ENCODE measurements at regions of chr2 and their contacts with region 1.

Region 1: DNA sequence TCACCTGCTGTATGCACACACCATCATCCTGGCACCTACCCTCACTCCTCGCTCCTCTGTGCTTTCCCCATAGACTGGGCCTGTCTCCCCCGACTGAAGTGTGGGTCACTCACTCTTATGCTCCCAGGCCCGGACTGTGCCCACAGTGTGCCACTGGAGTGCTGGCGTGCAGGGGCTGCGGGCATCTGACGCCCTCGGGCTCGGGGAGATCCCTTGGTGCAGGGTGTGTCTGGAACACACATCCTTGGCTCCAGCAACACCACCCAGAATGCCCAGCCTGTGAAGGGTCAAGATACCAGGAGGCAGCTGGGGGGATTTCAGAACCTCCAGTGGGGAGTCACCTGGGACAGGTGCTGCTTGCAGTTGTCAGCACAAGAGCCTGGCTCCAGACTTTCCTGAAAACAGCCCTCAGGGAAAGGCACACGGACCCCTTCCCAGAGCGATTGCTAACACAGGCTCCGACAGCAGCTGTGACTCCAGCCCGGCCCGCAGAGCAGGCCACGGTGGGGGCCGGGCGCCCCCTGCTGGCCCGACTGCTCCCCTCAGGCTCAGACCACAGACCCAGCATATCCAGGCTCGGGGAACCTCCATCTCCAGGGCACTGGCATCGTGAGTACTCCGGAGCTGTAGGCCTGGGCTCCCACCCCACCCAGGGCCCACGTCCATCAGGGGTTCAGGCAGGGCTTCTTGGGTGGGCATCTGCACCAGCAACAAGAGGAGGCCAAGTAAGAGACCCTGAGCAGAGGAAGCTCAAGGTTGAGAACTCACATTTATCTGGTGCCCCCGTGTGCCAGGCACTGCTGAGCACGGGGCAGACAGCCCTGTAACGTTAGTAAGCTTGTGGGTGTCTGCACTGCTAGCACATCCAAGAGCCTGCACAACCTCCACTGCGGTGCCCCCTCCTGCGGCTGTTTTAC is 8.6 kb downstream of the HS1BP3 start:
- DNase-seq: peak; percentile 53 to 86 (median 70)
- ATAC-seq: peak; percentile 99
- H3K4me3 ChIP-seq: no peak overlapping the region
- H3K4me3 Mint-ChIP-seq: no peak overlapping the region
- H3K27ac ChIP-seq: no peak overlapping the region
- H3K27ac Mint-ChIP-seq: no peak overlapping the region
- H3K4me1 ChIP-seq: peaks cover 10% of the 10 kb centered on the region
- H3K4me1 Mint-ChIP-seq: no peaks in the 10 kb centered on the region
- H3K27me3 ChIP-seq: no peaks in the 10 kb centered on the region
- H3K27me3 Mint-ChIP-seq: no peaks in the 10 kb centered on the region
- CTCF ChIP-seq: peak; percentile 84

Region 2: DNA sequence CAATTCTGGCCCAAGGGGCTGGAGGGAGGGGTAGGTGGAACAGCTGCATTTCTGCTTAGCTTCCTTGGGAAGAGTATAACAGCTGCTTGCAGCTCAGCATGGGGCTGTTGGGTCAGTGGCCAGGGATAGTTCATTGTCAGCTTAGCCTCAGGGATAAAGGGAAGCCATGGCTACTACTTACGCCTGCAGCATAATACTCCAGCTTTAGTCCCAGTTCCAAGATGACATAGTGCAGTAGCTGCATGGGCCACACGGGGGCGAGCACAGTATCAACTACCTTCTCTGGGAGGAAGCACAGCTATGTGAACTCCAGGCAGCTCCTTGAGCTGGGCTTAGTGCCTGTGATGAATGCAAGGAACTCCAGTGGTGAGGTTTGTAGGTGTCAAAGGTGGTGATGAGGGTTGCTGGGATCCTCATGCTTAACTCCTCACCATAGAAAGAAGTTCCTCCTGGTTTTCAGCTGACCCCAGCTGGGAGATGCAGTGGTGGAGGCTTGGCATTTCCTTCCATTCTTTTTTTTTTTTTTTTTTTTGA is 230.9 kb before region 1 on chr2:
- CTCF ChIA-PET with region 1: interaction called, 8 read pairs
- POLR2A ChIA-PET with region 1: interaction called, 3 read pairs
- intact Hi-C with region 1: loop called in 1 of 2 experiments (anchors 1 kb)
- DNase-seq: peak; percentile 43 to 81 (median 64)
- ATAC-seq: peak; percentile 99
- H3K4me3 ChIP-seq: no peak overlapping the region
- H3K4me3 Mint-ChIP-seq: no peak overlapping the region
- H3K27ac ChIP-seq: no peak overlapping the region
- H3K27ac Mint-ChIP-seq: no peak overlapping the region
- H3K4me1 ChIP-seq: no peaks in the 10 kb centered on the region
- H3K4me1 Mint-ChIP-seq: no peaks in the 10 kb centered on the region
- H3K27me3 ChIP-seq: peaks cover 0 to 2% of the 10 kb centered on the region in 2 experiments
- H3K27me3 Mint-ChIP-seq: peaks cover 4% of the 10 kb centered on the region
- CTCF ChIP-seq: peak; percentile 64

Region 3: GRCh38 chr2:20446917-20447436 is 195.3 kb before region 1 on chr2 and contains the start of gene RHOB:
- CTCF ChIA-PET with region 1: interaction called, 16 read pairs
- POLR2A ChIA-PET with region 1: interaction called, 4 read pairs
- intact Hi-C with region 1: loop called (anchors 1 kb)
- DNase-seq: peak; percentile 62 to 97 (median 81)
- ATAC-seq: peak; percentile 96
- H3K4me3 ChIP-seq: peak within 1 kb of the TSS; percentile 65
- H3K4me3 Mint-ChIP-seq: peak within 1 kb of the TSS; percentile 86
- H3K27ac ChIP-seq: no peak within 1 kb of the TSS
- H3K27ac Mint-ChIP-seq: no peak within 1 kb of the TSS
- H3K4me1 ChIP-seq: peaks cover 16% of the 10 kb centered on the region
- H3K4me1 Mint-ChIP-seq: no peaks in the 10 kb centered on the region
- H3K27me3 ChIP-seq: peaks cover 10 to 22% of the 10 kb centered on the region in 2 experiments
- H3K27me3 Mint-ChIP-seq: peaks cover 31% of the 10 kb centered on the region
- CTCF ChIP-seq: no peak
- total RNA-seq, gene RHOB: 25.9 to 26.6 TPM

Region 4: DNA sequence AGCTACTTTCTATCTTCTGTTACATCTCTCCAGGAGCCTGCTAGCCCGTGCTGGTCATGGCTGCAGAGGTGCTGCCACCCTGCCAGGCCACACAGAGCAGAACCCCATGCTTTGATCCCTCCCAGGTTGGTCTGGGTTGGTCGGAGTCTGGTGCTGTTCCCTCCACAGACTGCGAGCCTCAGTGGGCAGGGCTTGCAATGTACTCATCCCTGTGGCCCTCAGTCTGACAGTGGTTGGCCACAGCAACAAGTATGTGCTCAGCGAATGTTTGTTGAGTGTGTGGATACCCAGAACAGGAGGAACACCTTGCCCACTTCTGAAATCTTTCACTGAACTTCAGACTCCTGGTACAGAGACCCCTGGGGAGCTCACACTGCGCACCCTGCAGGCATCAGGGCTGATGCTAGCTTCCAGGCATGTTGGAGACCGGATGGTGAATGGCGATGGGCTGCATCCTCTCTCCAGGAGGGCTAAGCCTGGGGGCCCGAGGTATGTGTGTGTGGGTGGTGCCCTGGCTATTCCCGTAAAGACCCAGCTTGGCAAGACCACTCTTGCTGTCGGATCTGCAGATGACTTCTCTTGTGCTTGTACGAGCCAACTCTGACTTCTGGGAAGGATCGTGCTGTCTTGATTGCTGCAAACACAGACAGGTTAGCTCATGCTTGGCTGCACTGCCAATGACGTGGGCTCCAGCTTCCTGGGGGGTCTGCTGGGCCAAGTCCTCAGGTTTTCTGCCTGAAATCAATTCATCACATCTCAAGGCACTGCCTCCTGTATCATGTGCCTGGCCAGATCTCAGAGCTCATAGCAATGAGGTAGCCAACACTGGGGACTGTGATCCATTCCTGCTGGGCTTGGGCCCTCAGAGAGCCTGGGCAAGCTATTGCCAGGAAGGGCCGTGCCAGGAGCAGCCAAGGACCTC is 151.8 kb before region 1 on chr2:
- CTCF ChIA-PET with region 1: no interaction called
- POLR2A ChIA-PET with region 1: no interaction called
- intact Hi-C with region 1: no loop called
- DNase-seq: no peak
- ATAC-seq: no peak
- H3K4me3 ChIP-seq: no peak overlapping the region
- H3K4me3 Mint-ChIP-seq: no peak overlapping the region
- H3K27ac ChIP-seq: no peak overlapping the region
- H3K27ac Mint-ChIP-seq: no peak overlapping the region
- H3K4me1 ChIP-seq: no peaks in the 10 kb centered on the region
- H3K4me1 Mint-ChIP-seq: no peaks in the 10 kb centered on the region
- H3K27me3 ChIP-seq: no peaks in the 10 kb centered on the region
- H3K27me3 Mint-ChIP-seq: no peaks in the 10 kb centered on the region
- CTCF ChIP-seq: no peak

Region 5: DNA sequence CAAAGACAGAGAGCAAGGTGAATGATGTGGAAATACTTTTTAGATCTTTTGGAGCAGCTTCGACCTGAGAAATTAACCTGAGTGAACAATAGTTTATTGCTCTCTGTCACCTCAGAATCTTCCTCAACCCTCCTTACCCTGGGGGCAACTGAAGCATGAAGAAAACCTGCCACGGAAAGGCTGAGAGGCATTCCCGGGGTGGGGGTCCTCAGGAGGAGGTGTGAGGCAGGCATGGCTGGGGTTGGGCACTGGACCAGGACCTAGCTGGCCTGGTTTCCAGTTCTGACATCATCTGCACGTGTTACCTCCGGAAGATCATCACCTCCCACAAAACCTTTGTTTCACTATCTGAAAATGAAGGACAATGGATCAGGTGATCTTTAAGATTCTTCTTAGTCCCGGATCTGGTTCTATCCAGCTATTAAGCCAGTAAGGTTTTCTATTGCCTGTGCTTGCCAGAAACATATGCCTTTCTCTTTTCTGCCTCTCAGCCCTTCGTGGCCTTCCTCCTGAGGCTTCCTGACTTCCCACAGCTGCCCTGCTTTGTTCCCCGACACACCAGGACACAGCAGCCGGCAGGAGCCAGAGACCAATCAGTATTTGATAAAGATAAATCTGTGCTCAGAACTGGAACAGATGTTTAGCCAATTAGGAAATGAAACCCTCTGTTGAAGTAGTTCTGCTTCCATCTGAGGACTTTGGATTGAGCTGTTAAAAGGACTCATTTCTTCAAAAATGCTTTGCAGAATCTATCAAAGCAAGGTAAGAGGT is 714.0 kb after region 1 on chr2:
- CTCF ChIA-PET with region 1: no interaction called
- POLR2A ChIA-PET with region 1: no interaction called
- intact Hi-C with region 1: no loop called
- DNase-seq: no peak
- ATAC-seq: no peak
- H3K4me3 ChIP-seq: no peak overlapping the region
- H3K4me3 Mint-ChIP-seq: no peak overlapping the region
- H3K27ac ChIP-seq: no peak overlapping the region
- H3K27ac Mint-ChIP-seq: no peak overlapping the region
- H3K4me1 ChIP-seq: no peaks in the 10 kb centered on the region
- H3K4me1 Mint-ChIP-seq: no peaks in the 10 kb centered on the region
- H3K27me3 ChIP-seq: no peaks in the 10 kb centered on the region
- H3K27me3 Mint-ChIP-seq: no peaks in the 10 kb centered on the region
- CTCF ChIP-seq: no peak

Measured in CD4-positive, alpha-beta T cell (primary cell).